GM12878 (cell line): ENCODE measurements at regions of chr18 and their contacts with region 1.

Region 1: DNA sequence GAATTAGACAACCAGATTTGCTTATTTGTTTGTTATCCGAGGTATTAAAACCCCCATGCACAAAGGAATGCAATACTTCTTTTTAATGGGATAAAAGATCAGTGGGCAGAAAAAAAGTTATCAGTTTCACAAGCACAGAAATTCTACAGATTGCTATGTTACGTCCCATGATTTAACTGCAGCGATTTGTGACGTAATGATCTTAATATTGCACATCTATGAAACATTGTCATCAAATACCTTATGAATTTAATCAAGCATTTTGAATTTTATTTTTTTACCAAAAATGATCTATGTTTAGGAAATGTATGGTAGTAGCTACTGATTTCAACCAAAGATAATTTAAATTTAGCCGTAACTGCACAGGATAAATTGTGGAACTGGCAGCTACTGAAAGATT is 138.9 kb downstream of the FHOD3 start:
- DNase-seq: no peak
- ATAC-seq: no peak
- H3K4me3 ChIP-seq: no peak overlapping the region
- H3K27ac ChIP-seq: no peak overlapping the region
- H3K4me1 ChIP-seq: no peaks in the 10 kb centered on the region
- H3K27me3 ChIP-seq: no peaks in the 10 kb centered on the region
- CTCF ChIP-seq: no peak
- EP300 ChIP-seq: no peak
- POLR2A ChIP-seq: no peak
- RAD21 ChIP-seq: no peak

Region 2: DNA sequence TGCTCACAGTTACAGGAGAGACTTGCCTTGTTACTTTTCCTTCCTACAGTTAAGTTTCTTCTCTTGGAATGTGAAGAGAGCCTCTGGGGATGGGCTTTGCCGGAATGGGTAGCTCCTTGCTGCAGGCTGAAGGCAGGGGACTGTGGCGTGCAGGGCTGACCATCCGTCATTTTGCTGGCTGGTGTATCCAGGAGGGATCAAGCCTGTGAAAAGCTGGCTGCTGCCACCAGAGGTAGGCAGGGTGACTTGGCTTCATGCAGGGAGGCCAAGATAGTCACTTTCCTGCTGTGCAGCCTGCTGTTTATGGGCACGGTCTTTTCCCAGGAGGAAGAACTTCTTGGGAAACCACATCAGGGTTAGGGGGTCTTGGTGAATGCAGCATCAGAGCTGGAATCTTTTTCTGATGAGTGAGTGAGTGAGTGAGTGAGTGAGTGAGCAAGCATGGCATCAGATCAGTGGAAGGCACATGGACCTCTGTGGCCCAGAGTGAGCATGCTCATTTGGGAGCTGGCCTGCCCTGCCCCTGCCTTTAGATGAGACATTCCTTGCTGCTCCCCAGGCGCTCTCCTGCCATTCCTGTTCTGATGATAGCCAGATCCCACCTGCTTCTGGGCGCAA is 105.8 kb before region 1 on chr18:
- CTCF ChIA-PET with region 1: no interaction called
- POLR2A ChIA-PET with region 1: no interaction called
- RAD21 ChIA-PET with region 1: no interaction called
- SMC1A ChIA-PET with region 1: no interaction called
- in situ Hi-C with region 1: no loop called
- intact Hi-C with region 1: no loop called
- DNase-seq: no peak
- ATAC-seq: no peak
- H3K4me3 ChIP-seq: no peak overlapping the region
- H3K27ac ChIP-seq: no peak overlapping the region
- H3K4me1 ChIP-seq: peaks cover 16% of the 10 kb centered on the region
- H3K27me3 ChIP-seq: peaks cover 0 to 4% of the 10 kb centered on the region in 2 experiments; a peak in 1 of 4 replicates
- CTCF ChIP-seq: no peak
- EP300 ChIP-seq: no peak
- POLR2A ChIP-seq: no peak
- RAD21 ChIP-seq: no peak

Region 3: GRCh38 chr18:36468161-36468560 is 31.8 kb after region 1 on chr18:
- CTCF ChIA-PET with region 1: interaction called, 4 read pairs
- POLR2A ChIA-PET with region 1: no interaction called
- RAD21 ChIA-PET with region 1: no interaction called
- SMC1A ChIA-PET with region 1: interaction called, 11 read pairs
- in situ Hi-C with region 1: no loop called
- intact Hi-C with region 1: no loop called
- DNase-seq: no peak
- ATAC-seq: no peak
- H3K4me3 ChIP-seq: no peak overlapping the region
- H3K27ac ChIP-seq: no peak overlapping the region
- H3K4me1 ChIP-seq: peaks cover 3% of the 10 kb centered on the region; the same call in 1 of the 2 replicates
- H3K27me3 ChIP-seq: no peaks in the 10 kb centered on the region
- CTCF ChIP-seq: no peak
- EP300 ChIP-seq: no peak
- POLR2A ChIP-seq: no peak
- RAD21 ChIP-seq: no peak